ENCODE measurements at regions of chr1 and their contacts with region 1.

Region 1: DNA sequence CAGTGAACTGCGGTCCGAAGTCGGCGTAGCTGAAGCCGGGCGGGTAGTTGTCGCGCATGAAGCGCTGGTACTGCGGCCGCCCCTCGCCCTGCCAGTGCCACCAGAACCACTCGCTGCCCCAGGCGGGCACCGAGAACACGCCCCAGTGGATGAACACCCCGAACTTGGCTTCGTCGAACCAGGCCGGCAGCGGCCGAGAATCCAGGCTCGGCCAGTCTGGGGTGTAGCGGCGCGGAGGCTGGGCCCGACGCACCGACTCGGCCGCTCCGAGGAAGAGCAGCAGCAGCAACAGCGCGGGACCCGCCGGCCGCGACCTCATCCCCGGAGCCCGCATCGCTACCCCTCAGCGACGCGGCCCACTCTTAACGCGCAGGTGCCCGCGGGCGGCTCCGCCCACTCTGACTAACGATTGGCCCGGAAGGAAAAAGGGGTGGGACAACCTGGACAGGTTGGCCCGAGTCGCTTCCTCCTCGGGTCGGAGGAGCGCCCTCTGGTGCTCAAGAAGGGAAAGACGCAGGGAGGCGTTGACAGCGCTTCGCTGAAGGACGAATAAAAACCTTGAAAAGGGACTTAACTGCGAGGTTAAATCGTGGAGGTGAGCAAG is at the start of gene FUCA1:
- DNase-seq: peak; percentile 96
- ATAC-seq: peak; percentile 99
- total RNA-seq, gene FUCA1: 12.3 TPM

Region 2: GRCh38 chr1:23772049-23772853 is 95.8 kb before region 1 on chr1:
- intact Hi-C with region 1: loop called (anchors 5 kb)
- DNase-seq: peak; percentile 92
- ATAC-seq: peak; percentile 84

Region 3: DNA sequence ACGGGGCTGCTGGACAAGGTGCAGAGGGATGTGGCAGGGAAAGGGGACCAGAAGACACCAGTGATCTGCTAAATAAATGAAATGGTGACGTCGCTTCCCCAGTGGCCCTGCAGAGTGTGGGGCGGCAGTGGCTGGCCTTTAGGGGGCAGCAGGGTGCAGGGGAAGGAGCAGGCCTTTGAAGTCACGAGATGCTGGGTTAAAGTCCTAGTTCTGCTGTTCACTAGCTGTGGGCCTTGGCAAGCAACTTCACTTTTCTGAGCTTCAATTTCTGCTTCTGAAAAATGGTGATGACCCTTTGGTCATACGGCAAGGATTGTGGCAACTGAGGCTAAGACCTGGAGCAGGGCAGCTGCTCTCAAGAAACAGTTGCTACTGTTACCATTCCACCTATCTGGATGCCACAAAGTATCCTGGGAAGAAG is 58.3 kb before region 1 on chr1:
- intact Hi-C with region 1: loop called (anchors 5 kb)
- DNase-seq: peak; percentile 75
- ATAC-seq: peak; percentile 92

Region 4: DNA sequence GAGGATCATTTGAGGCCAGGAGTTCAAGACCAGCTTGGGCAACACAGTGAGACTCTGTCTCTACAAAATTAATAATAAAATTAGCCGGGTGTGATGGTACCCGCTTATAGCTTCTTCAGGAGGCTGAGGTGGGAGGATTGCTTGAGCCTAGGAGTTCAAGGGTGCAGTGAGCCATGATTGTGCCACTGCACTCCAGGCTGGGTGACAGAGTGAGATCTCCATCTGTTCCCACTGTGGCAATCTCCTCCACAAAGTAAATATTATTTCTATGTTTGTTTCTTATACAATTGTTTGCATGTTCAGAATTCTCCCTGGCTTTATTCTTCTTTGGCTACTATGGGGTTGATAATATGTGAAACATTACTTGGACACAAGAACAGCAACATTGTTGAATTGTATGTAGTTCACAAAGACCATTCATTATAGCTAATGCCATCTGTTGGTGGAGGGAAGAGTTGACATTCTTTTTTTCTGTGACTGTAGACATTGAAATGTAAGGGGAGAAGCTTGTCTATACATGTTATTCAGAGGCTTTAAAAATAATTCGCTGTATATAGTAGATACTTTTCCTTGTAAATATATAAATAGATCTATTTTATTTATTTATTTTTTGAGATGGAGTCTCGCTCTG is 159.9 kb after region 1 on chr1:
- intact Hi-C with region 1: no loop called
- DNase-seq: no peak
- ATAC-seq: peak; percentile 80

Measured in Right ventricle myocardium superior (tissue), 1 donor.